HCT116 (cell line): ENCODE measurements at regions of chr1 and their contacts with region 1.

Region 1: DNA sequence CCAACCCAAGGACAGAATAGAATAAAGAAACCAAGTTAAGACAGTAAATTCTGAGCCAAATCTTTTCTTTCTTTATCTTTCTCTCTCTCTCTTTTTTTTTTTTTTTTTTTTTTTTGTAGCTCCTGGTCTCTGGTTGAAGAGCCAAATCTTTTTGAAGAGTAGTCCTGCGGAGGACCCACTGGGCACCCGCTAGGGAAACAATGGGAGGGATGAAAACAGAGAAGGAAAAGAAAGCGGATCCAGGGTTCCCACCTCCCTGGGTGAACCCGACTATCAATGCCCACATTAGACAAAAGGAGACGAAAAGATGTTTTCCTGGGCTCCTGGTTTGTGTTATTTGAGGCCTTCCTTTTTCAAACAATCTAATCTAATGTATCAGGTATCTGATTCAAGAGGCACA is 49.8 kb upstream of the FBXO28 start:
- DNase-seq: no peak
- ATAC-seq: no peak
- H3K4me3 ChIP-seq: no peak overlapping the region
- H3K27ac ChIP-seq: no peak overlapping the region
- H3K4me1 ChIP-seq: peaks cover 11 to 29% of the 10 kb centered on the region in 2 experiments; a peak in 3 of 4 replicates
- H3K27me3 ChIP-seq: no peaks in the 10 kb centered on the region
- CTCF ChIP-seq: no peak
- POLR2A ChIP-seq: no peak
- RAD21 ChIP-seq: no peak

Region 2: DNA sequence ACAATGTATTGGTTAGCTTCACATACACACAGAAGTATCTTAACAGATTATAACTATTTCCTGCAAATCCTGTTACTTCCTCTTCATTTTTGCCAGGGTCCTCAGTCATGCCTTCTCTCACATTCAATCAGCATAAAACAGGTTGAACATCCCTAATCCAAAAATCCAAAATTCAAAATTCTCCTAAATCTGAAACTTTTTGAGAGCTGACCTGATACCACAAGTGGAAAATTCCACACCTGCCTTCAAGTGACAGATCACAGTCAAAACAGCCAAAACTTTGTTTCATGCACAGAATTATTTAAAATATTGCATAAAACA is 13.1 kb before region 1 on chr1:
- CTCF ChIA-PET with region 1: interaction called, 10 read pairs
- POLR2A ChIA-PET with region 1: no interaction called
- RAD21 ChIA-PET with region 1: interaction called in 1 of 2 experiments, 3 read pairs
- intact Hi-C with region 1: no loop called
- DNase-seq: no peak
- ATAC-seq: no peak
- H3K4me3 ChIP-seq: no peak overlapping the region
- H3K27ac ChIP-seq: no peak overlapping the region
- H3K4me1 ChIP-seq: peaks cover 0 to 11% of the 10 kb centered on the region in 2 experiments; a peak in 2 of 4 replicates
- H3K27me3 ChIP-seq: no peaks in the 10 kb centered on the region
- CTCF ChIP-seq: no peak
- POLR2A ChIP-seq: no peak
- RAD21 ChIP-seq: no peak

Region 3: GRCh38 chr1:224080115-224080774 is 16.1 kb after region 1 on chr1:
- CTCF ChIA-PET with region 1: no interaction called
- POLR2A ChIA-PET with region 1: no interaction called
- RAD21 ChIA-PET with region 1: no interaction called
- intact Hi-C with region 1: no loop called
- DNase-seq: peak; percentile 53
- ATAC-seq: peak; percentile 75
- H3K4me3 ChIP-seq: no peak overlapping the region
- H3K27ac ChIP-seq: no peak overlapping the region
- H3K4me1 ChIP-seq: peaks cover 7 to 23% of the 10 kb centered on the region in 2 experiments; a peak in 2 of 4 replicates
- H3K27me3 ChIP-seq: no peaks in the 10 kb centered on the region
- CTCF ChIP-seq: no peak
- POLR2A ChIP-seq: no peak
- RAD21 ChIP-seq: no peak

Region 4: DNA sequence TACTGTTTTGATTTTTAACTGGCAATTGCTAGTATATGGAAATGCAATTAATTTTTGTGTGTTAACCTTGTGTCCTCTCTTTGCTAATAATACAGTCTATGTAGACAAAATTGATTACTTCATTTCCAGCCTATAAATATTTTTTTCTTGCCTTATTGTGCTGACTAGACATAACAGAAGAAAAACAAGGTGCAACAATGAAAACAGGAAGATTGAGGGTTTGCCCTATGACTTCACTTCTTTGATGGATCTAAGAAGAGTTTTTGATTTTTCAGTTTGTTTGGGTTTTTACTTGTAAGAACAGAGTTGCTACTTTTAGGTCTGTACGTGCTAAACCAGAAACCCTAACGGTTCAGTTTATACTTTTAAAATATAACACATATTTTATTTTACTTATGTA is 284.0 kb after region 1 on chr1:
- CTCF ChIA-PET with region 1: no interaction called
- POLR2A ChIA-PET with region 1: no interaction called
- RAD21 ChIA-PET with region 1: no interaction called
- intact Hi-C with region 1: no loop called
- DNase-seq: no peak
- ATAC-seq: no peak
- H3K4me3 ChIP-seq: no peak overlapping the region
- H3K27ac ChIP-seq: no peak overlapping the region
- H3K4me1 ChIP-seq: no peaks in the 10 kb centered on the region
- H3K27me3 ChIP-seq: no peaks in the 10 kb centered on the region
- CTCF ChIP-seq: no peak
- POLR2A ChIP-seq: no peak
- RAD21 ChIP-seq: no peak